ENCODE measurements at regions of chr16 and their contacts with region 1.

Region 1: GRCh38 chr16:29720699-29721098 is 25.1 kb downstream of the C16orf54 start:
- DNase-seq: no peak
- H3K4me3 ChIP-seq: no peak overlapping the region
- H3K4me3 Mint-ChIP-seq: peak overlapping the region in 2 of 7 donors; percentile 8 to 13
- H3K27ac ChIP-seq: no peak overlapping the region
- H3K27ac Mint-ChIP-seq: no peak overlapping the region
- H3K4me1 ChIP-seq: no peaks in the 10 kb centered on the region
- H3K4me1 Mint-ChIP-seq: peaks cover 8 to 14% (median 13%) of the 10 kb centered on the region in 3 donors
- H3K27me3 ChIP-seq: no peaks in the 10 kb centered on the region
- H3K27me3 Mint-ChIP-seq: peaks cover 0 to 1% of the 10 kb centered on the region in 2 donors

Region 2: DNA sequence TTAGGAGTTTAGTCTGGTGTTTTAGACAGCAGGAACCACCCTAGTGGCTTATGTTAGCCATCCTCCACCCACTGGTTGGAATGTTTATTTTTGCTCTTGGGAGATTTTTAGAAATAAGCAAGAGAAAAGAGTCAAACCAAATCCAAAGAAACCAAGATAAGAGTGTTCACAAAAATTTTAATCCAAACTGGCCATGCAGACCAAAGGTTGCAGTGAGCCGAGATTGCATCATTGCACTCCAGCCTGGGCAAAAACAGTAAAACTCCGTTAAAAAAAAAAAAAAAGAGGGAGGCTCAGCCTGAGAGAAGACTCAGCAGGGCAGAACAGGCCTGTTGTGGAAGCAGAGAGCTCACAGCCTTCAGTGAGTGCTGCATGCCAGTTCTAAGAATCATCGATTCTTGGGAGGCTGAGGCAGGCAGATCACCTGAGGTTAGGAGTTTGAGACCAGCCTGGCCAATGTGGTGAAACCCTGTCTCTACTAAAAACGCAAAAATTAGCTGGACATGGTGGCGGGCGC is 37.3 kb after region 1 on chr16:
- CTCF ChIA-PET with region 1: no interaction called
- POLR2A ChIA-PET with region 1: interaction called, 10 read pairs
- DNase-seq: no peak
- H3K4me3 ChIP-seq: no peak overlapping the region
- H3K4me3 Mint-ChIP-seq: no peak overlapping the region
- H3K27ac ChIP-seq: no peak overlapping the region
- H3K27ac Mint-ChIP-seq: no peak overlapping the region
- H3K4me1 ChIP-seq: peaks cover 22% of the 10 kb centered on the region
- H3K4me1 Mint-ChIP-seq: peaks cover 9 to 33% (median 19%) of the 10 kb centered on the region in 3 donors
- H3K27me3 ChIP-seq: no peaks in the 10 kb centered on the region
- H3K27me3 Mint-ChIP-seq: no peaks in the 10 kb centered on the region

Measured in CD8-positive, alpha-beta memory T cell (primary cell).